ENCODE measurements at regions of chr2 and their contacts with region 1.

Region 1: DNA sequence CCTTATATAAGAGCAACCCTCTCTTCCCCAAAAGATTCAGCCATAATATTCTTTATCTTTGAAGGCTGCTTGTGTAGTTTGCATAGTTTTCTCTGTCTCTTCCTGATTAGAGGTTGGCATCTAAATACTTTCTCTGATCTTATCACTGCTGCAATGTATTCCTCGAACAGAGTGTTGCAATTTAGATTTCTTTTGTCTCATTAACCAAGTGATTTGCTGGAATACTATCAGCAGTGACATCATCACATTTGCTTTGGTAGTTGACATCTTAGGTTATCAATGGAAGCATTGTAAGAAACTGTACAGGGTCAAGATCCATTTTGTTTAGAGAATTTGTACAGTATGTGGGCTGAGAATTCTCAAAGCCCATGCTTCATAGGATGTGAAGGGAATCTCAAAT is 72.0 kb upstream of the NEUROD1 start:
- DNase-seq: no peak
- H3K4me3 ChIP-seq: no peak overlapping the region
- CTCF ChIP-seq: no peak
- POLR2A ChIP-seq: no peak

Region 2: GRCh38 chr2:181904022-181904632 is 151.8 kb after region 1 on chr2:
- intact Hi-C with region 1: loop called (anchors 10 kb)
- DNase-seq: no peak
- H3K4me3 ChIP-seq: no peak overlapping the region
- CTCF ChIP-seq: no peak
- POLR2A ChIP-seq: no peak

Measured in lower leg skin (tissue), 4 donors.